H1 (cell line): ENCODE measurements at regions of chr1 and their contacts with region 1.

Region 1: DNA sequence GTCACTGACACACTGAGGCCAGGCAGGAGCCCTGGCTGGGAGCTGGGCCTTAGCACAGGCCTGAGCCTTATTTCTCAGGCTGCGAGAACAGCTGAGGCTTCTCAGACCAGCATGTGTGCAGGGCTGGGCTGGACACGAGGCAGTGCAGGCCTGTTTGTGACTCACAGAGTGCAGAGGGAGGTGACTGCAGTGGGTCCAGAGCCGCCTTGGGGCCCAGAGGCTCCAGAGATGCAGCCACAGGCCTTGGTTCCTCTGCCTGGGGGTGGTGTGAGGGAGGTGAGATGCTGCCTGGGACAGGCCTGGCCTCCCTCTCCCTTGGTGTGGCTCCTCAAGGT is 61.2 kb upstream of the ETV3 start:
- DNase-seq: no peak
- H3K4me3 ChIP-seq: no peak overlapping the region
- H3K27ac ChIP-seq: no peak overlapping the region
- H3K4me1 ChIP-seq: no peaks in the 10 kb centered on the region; a peak in 1 of 7 replicates
- H3K27me3 ChIP-seq: peaks cover 0 to 3% (median 0%) of the 10 kb centered on the region in 4 experiments; a peak in 1 of 7 replicates
- CTCF ChIP-seq: no peak
- EP300 ChIP-seq: no peak
- POLR2A ChIP-seq: no peak
- RAD21 ChIP-seq: no peak

Region 2: GRCh38 chr1:157124855-157125254 is 74.5 kb before region 1 on chr1:
- CTCF ChIA-PET with region 1: no interaction called
- POLR2A ChIA-PET with region 1: no interaction called
- DNase-seq: no peak
- H3K4me3 ChIP-seq: no peak overlapping the region
- H3K27ac ChIP-seq: no peak overlapping the region
- H3K4me1 ChIP-seq: peaks cover 0 to 6% (median 0%) of the 10 kb centered on the region in 4 experiments; a peak in 1 of 7 replicates
- H3K27me3 ChIP-seq: no peaks in the 10 kb centered on the region
- CTCF ChIP-seq: peak in 2 of 3 experiments; percentile 30 to 31; a peak in 2 of 4 replicates
- EP300 ChIP-seq: no peak
- POLR2A ChIP-seq: no peak
- RAD21 ChIP-seq: no peak; a peak in 1 of 4 replicates

Region 3: DNA sequence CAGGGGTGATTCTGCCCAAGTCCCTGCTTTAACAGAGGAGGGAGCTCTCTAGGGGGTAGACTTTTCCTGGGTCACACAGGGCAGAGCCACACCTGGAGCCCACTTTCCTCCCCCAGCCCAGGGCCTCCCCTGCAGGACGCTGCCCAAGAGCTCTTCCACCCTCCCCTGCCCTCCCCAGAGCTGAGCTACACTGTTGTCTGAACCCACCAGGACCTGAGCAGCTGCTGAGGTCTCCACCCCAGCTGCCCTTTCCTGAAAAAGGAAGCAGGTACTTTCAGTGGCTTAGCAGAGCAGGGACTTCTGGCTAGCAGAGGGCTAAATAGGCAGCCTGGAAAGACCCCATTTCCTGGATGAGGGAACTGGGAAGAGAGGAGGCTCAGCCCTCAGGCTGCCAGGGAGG is 108.1 kb after region 1 on chr1:
- CTCF ChIA-PET with region 1: interaction called, 51 read pairs
- POLR2A ChIA-PET with region 1: no interaction called
- DNase-seq: no peak
- H3K4me3 ChIP-seq: no peak overlapping the region
- H3K27ac ChIP-seq: no peak overlapping the region
- H3K4me1 ChIP-seq: peaks cover 0 to 7% (median 3%) of the 10 kb centered on the region in 4 experiments; a peak in 3 of 7 replicates
- H3K27me3 ChIP-seq: peaks cover 0 to 1% (median 0%) of the 10 kb centered on the region in 4 experiments; a peak in 1 of 7 replicates
- CTCF ChIP-seq: no peak
- EP300 ChIP-seq: no peak
- POLR2A ChIP-seq: no peak
- RAD21 ChIP-seq: no peak